ENCODE measurements at regions of chr1 and their contacts with region 1.

Region 1: GRCh38 chr1:57520743-57521515 is 97.1 kb upstream of the DAB1 start:
- DNase-seq: no peak
- H3K4me3 ChIP-seq: no peak overlapping the region
- H3K27ac ChIP-seq: no peak overlapping the region
- H3K4me1 ChIP-seq: no peaks in the 10 kb centered on the region
- H3K27me3 ChIP-seq: no peaks in the 10 kb centered on the region
- CTCF ChIP-seq: no peak

Region 2: DNA sequence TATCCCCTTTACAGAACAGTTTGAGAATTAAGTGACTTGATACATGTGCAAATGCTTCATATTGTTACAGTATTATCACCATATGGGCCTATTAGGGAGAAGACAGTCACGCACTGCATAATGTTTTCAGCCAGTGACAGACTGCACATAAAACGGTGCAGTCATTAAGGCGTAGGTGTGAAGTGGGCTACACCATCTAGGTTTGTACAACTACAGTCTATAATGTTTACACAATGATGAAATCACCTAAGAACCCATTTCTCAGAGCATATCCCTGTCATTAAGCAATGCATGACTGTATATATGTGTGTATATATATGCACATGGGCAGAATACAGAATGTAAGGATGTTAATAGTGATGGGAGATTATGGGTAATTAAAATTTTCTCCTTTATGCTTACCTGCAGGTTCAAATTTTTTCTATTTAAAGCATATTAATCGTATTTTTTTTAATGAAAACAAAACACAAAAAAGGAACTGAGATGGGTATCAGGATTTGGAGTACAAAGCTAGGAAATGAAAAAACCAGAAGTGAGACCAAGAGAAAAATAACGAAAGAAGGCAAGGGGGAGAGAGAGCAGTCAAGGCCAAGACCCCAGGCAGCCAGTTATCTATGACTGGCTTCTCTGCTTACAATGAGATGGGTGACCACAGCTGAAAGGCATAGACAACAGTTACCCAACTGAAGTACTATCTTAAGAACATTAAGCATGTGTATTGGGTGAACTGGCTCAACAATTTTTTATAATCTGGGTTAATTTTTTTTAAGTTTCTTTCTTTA is 25.8 kb after region 1 on chr1:
- CTCF ChIA-PET with region 1: no interaction called
- POLR2A ChIA-PET with region 1: no interaction called
- intact Hi-C with region 1: loop called (anchors 1 kb)
- DNase-seq: no peak
- H3K4me3 ChIP-seq: no peak overlapping the region
- H3K27ac ChIP-seq: no peak overlapping the region
- H3K4me1 ChIP-seq: no peaks in the 10 kb centered on the region
- H3K27me3 ChIP-seq: no peaks in the 10 kb centered on the region
- CTCF ChIP-seq: no peak

Region 3: DNA sequence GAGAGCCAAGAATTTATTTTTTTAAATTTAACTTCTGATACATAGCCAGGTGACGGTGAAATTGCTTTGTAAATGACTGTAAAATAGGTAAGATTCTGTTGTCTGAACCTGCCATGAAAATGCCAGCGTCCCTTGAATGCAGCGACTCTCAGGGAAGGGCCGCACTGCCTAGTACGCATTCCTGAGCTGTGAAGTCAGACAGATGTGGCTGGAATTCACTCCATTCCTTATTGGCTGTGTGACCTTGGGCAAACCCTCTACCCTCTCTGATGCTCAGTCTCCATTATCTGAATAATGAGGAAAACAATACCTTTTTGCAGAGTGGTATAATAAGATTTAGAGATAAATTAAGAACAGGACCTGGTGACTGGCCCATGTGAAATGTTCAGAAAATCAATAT is 70.0 kb after region 1 on chr1:
- CTCF ChIA-PET with region 1: no interaction called
- POLR2A ChIA-PET with region 1: interaction called, 13 read pairs
- intact Hi-C with region 1: no loop called
- DNase-seq: no peak
- H3K4me3 ChIP-seq: no peak overlapping the region
- H3K27ac ChIP-seq: no peak overlapping the region
- H3K4me1 ChIP-seq: no peaks in the 10 kb centered on the region
- H3K27me3 ChIP-seq: no peaks in the 10 kb centered on the region
- CTCF ChIP-seq: no peak

Measured in PC-9 (cell line).